Sigmoid colon (tissue), 7 donors: ENCODE measurements at regions of chr11 and their contacts with region 1.

Region 1: DNA sequence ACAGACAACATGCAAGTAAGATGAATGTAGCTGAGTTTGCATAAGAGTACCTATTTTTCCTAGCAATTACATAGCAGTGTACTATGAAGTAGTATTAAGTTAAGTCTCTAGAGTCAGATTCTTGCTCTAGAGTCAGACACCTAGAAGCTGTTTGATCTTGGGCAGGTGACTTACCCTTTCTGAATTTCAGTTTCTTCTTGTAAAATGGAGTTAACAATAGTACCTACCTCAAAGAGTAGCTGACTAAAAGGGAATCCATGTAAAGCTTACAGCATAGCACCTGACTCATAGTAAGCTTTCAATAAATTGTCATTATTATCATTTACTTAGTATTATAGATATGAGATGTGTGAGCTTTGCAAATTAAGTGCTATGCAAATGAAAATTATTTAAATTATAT is 47.8 kb upstream of the PTPRJ start:
- DNase-seq: no peak
- H3K4me3 ChIP-seq: no peak overlapping the region
- H3K27ac ChIP-seq: no peak overlapping the region
- H3K4me1 ChIP-seq: no peaks in the 10 kb centered on the region
- H3K27me3 ChIP-seq: no peaks in the 10 kb centered on the region
- CTCF ChIP-seq: no peak
- EP300 ChIP-seq: no peak
- POLR2A ChIP-seq: no peak

Region 2: GRCh38 chr11:47879259-47880158 is 53.0 kb before region 1 on chr11:
- intact Hi-C with region 1: no loop called
- DNase-seq: no peak
- H3K4me3 ChIP-seq: no peak overlapping the region
- H3K27ac ChIP-seq: no peak overlapping the region
- H3K4me1 ChIP-seq: no peaks in the 10 kb centered on the region
- H3K27me3 ChIP-seq: no peaks in the 10 kb centered on the region
- CTCF ChIP-seq: no peak
- EP300 ChIP-seq: no peak
- POLR2A ChIP-seq: no peak

Region 3: DNA sequence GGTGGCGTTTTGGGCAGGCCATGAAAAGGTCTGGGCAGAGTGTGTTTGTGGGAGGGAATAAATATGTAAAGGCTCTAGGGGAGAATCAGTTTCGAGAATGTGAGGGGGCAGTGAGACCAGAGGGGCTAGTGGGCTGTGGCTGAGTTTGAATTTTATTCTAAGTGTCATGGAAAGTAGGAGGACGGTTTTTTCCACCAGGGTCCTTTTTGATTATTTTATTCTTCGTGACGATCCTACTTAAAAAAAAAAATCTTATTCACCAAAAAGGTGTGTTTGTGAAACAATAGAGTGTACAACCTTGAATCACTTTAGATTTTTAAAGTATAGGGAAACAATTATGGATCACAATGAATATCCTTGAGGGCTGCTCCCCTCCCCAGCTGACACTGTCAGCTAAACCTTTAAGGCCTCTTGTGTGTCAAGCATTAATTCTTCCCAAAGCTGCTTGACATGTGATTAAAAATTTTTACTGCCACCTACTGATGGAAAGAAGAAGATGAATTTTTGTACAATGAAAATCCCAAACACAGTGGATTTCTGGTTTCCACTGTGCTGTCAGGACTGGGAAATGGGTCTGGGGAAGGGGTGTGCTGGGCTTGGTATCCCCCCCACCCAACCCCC is 176.6 kb after region 1 on chr11:
- intact Hi-C with region 1: loop called (anchors 1 kb)
- DNase-seq: no peak
- H3K4me3 ChIP-seq: peak overlapping the region in 2 of 4 donors; percentile 4 to 34
- H3K27ac ChIP-seq: peak overlapping the region in 2 of 4 donors; percentile 33 to 40
- H3K4me1 ChIP-seq: peaks cover 0 to 24% (median 16%) of the 10 kb centered on the region in 4 donors
- H3K27me3 ChIP-seq: no peaks in the 10 kb centered on the region
- CTCF ChIP-seq: peak in 2 of 4 experiments; percentile 11 to 17
- EP300 ChIP-seq: no peak
- POLR2A ChIP-seq: no peak